MCF 10A (cell line): ENCODE measurements at regions of chrX and their contacts with region 1.

Region 1: DNA sequence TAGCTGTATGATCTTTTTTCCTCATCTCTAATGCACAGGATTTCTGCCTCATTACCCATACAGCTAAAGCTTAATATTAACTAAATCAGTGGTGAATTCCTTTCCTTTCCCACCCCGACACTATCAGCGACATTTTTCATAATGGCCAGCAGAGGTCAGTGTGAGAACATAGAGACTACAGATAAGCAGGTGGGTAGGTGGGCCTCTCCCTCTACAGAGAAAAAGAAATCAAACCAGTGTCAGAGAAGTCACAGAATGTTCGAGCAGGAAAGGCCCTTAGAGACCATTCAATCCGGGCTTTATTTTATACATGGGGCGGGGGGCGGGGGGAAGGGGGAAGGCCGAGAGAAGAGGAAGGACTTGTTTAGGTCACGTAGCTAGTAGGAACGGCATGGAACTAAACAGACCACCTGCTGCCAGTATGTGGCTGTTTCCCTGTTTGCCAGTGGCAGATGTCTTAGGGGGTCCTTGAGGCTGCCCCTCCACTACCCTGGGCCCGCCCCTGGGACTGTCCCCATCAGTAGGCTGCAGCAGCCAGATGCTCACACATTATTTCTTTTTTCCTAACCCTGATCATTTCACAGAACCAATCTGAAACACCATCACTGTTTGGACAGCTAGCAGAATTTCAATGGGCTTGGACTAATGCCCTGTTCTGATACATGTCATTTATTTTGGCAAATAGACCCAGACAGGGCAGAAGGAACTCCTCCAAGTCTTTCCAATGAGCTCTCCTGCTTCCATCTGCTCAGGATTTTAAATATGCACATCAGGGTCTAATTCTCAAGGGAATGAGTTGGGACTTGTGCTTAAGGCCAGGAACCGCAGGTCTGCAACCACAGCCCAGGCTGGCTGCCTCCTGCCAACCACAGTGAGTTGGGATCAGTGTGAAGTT is 133.4 kb downstream of the ATG4A start:
- DNase-seq: peak; percentile 53
- H3K4me3 Mint-ChIP-seq: no peak overlapping the region
- H3K27ac Mint-ChIP-seq: peak overlapping the region; percentile 65
- H3K4me1 Mint-ChIP-seq: peaks cover 6% of the 10 kb centered on the region
- H3K27me3 Mint-ChIP-seq: peaks cover 87% of the 10 kb centered on the region
- CTCF ChIP-seq: peak; percentile 74

Region 2: DNA sequence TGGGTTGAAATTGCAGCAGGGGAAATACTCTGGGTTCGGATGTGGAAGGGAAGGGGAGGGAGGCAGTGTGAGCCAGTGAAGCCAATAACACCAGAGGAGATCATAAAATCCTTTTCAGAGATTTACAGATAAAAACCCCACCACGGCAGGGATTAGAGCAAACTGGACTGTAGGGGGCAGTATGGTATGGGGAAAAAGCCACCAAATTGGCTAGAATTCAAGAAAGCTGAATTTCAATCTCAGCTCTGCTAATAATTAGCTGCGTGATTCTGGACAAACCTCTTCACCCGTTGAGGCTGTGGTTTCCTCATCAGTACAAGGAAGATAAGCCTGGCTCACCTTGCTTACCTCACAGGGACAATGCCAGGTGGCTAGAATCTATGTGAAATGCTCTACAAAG is 25.3 kb before region 1 on chrX:
- CTCF ChIA-PET with region 1: interaction called, 20 read pairs
- POLR2A ChIA-PET with region 1: no interaction called
- intact Hi-C with region 1: no loop called
- DNase-seq: peak; percentile 41
- H3K4me3 Mint-ChIP-seq: no peak overlapping the region
- H3K27ac Mint-ChIP-seq: no peak overlapping the region
- H3K4me1 Mint-ChIP-seq: no peaks in the 10 kb centered on the region
- H3K27me3 Mint-ChIP-seq: peaks cover 97% of the 10 kb centered on the region
- CTCF ChIP-seq: peak; percentile 45

Region 3: DNA sequence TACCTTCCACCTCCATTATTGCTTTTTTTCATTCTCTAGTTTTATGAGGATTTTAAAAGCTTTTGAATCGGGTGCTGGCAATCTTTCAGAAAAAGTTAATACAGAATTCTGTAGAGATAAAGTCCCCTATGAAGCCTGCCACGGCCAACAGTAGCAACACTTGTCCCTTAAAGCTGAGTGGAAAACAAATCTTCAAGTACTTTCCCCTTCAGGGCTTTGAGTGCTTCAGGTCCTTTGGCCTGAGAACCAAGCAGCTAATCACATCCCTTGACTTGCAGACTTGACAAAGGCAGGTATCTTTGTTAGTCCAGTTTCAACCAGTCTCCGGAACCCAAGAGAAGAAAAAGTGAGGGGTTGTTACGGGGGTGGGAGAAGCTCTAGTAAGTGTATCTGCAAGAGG is 11.0 kb after region 1 on chrX:
- CTCF ChIA-PET with region 1: interaction called, 17 read pairs
- POLR2A ChIA-PET with region 1: no interaction called
- intact Hi-C with region 1: no loop called
- DNase-seq: no peak
- H3K4me3 Mint-ChIP-seq: no peak overlapping the region
- H3K27ac Mint-ChIP-seq: no peak overlapping the region
- H3K4me1 Mint-ChIP-seq: no peaks in the 10 kb centered on the region
- H3K27me3 Mint-ChIP-seq: peaks cover 78% of the 10 kb centered on the region
- CTCF ChIP-seq: no peak

Region 4: GRCh38 chrX:108270739-108271396 is 45.9 kb after region 1 on chrX:
- CTCF ChIA-PET with region 1: interaction called, 10 read pairs
- POLR2A ChIA-PET with region 1: interaction called, 4 read pairs
- intact Hi-C with region 1: no loop called
- DNase-seq: no peak
- H3K4me3 Mint-ChIP-seq: peak overlapping the region; percentile 42
- H3K27ac Mint-ChIP-seq: peak overlapping the region; percentile 93
- H3K4me1 Mint-ChIP-seq: peaks cover 50% of the 10 kb centered on the region
- H3K27me3 Mint-ChIP-seq: peaks cover 74% of the 10 kb centered on the region
- CTCF ChIP-seq: no peak

Region 5: GRCh38 chrX:108304210-108304609 is 79.2 kb after region 1 on chrX:
- CTCF ChIA-PET with region 1: interaction called, 72 read pairs
- POLR2A ChIA-PET with region 1: no interaction called
- intact Hi-C with region 1: loop called (anchors 1 kb)
- DNase-seq: peak; percentile 24
- H3K4me3 Mint-ChIP-seq: no peak overlapping the region
- H3K27ac Mint-ChIP-seq: no peak overlapping the region
- H3K4me1 Mint-ChIP-seq: peaks cover 4% of the 10 kb centered on the region
- H3K27me3 Mint-ChIP-seq: peaks cover 25% of the 10 kb centered on the region
- CTCF ChIP-seq: peak; percentile 37

Region 6: DNA sequence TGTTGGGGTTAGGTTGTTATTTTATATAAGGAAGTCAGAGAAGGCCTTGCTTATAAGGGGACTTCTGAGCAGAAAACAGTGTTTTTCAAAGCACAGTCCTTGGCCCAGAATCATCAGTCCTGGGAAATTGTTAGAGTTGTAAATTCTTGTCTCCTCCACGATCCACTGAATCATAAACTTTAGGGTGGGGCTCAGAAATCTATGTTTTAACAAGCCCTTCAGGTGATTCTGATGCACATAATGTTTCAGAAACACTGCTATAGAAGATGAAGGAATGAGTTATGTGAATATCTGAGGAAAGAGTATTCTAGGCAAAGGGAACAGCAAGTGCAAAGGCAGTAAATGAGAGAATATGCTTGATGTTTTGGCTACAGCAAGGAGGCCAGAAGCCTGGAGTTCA is 91.5 kb after region 1 on chrX:
- CTCF ChIA-PET with region 1: no interaction called
- POLR2A ChIA-PET with region 1: no interaction called
- intact Hi-C with region 1: no loop called
- DNase-seq: no peak
- H3K4me3 Mint-ChIP-seq: peak overlapping the region; percentile 24
- H3K27ac Mint-ChIP-seq: peak overlapping the region; percentile 84
- H3K4me1 Mint-ChIP-seq: peaks cover 47% of the 10 kb centered on the region
- H3K27me3 Mint-ChIP-seq: peaks cover 81% of the 10 kb centered on the region
- CTCF ChIP-seq: no peak

Region 7: GRCh38 chrX:108399427-108400162 is 174.6 kb after region 1 on chrX:
- CTCF ChIA-PET with region 1: interaction called, 4 read pairs
- POLR2A ChIA-PET with region 1: interaction called, 6 read pairs
- intact Hi-C with region 1: loop called (anchors 5 kb)
- DNase-seq: peak; percentile 90
- H3K4me3 Mint-ChIP-seq: peak overlapping the region; percentile 57
- H3K27ac Mint-ChIP-seq: peak overlapping the region; percentile 82
- H3K4me1 Mint-ChIP-seq: peaks cover 65% of the 10 kb centered on the region
- H3K27me3 Mint-ChIP-seq: peaks cover 21% of the 10 kb centered on the region
- CTCF ChIP-seq: no peak

Region 8: DNA sequence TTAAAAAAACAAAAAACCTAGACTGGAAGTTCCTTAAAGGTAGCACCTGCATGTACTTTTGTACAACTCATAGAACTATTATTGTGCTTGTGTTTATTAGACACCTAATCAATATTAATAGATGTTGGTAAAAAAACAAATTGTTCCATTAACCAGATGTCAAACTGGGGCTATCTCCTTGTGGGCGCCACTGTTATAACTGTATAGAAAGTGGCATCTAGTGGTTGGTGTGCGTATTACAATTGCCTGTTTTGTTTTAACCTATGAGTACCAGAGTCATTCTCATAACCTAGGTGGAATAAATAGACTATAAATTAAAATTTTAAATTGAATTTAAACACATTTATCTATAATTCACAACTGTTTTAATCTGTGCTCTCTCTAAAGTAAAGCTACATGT is 312.0 kb after region 1 on chrX:
- CTCF ChIA-PET with region 1: interaction called, 34 read pairs
- POLR2A ChIA-PET with region 1: no interaction called
- intact Hi-C with region 1: loop called (anchors 1 kb)
- DNase-seq: peak; percentile 56
- H3K4me3 Mint-ChIP-seq: no peak overlapping the region
- H3K27ac Mint-ChIP-seq: no peak overlapping the region
- H3K4me1 Mint-ChIP-seq: no peaks in the 10 kb centered on the region
- H3K27me3 Mint-ChIP-seq: peaks cover 59% of the 10 kb centered on the region
- CTCF ChIP-seq: peak; percentile 71